ENCODE measurements at regions of chr14 and their contacts with region 1.

Region 1: GRCh38 chr14:55354500-55354899 is 57.1 kb downstream of the ATG14 start:
- DNase-seq: peak; percentile 72
- ATAC-seq: peak; percentile 92
- H3K4me3 Mint-ChIP-seq: no peak overlapping the region
- H3K27ac Mint-ChIP-seq: peak overlapping the region; percentile 49
- H3K4me1 Mint-ChIP-seq: peaks cover 19% of the 10 kb centered on the region
- H3K27me3 Mint-ChIP-seq: no peaks in the 10 kb centered on the region

Region 2: GRCh38 chr14:55102141-55102621 is 252.3 kb before region 1 on chr14:
- CTCF ChIA-PET with region 1: no interaction called
- DNase-seq: peak; percentile 88
- ATAC-seq: peak; percentile 63
- H3K4me3 Mint-ChIP-seq: peak overlapping the region; percentile 67
- H3K27ac Mint-ChIP-seq: peak overlapping the region; percentile 100
- H3K4me1 Mint-ChIP-seq: peaks cover 75% of the 10 kb centered on the region
- H3K27me3 Mint-ChIP-seq: no peaks in the 10 kb centered on the region

Region 3: GRCh38 chr14:55245657-55246268 is 108.7 kb before region 1 on chr14:
- CTCF ChIA-PET with region 1: interaction called, 11 read pairs
- DNase-seq: no peak
- ATAC-seq: peak; percentile 30
- H3K4me3 Mint-ChIP-seq: no peak overlapping the region
- H3K27ac Mint-ChIP-seq: no peak overlapping the region
- H3K4me1 Mint-ChIP-seq: no peaks in the 10 kb centered on the region
- H3K27me3 Mint-ChIP-seq: peaks cover 45% of the 10 kb centered on the region

Region 4: GRCh38 chr14:55277972-55278740 is 76.3 kb before region 1 on chr14:
- CTCF ChIA-PET with region 1: interaction called, 100 read pairs
- DNase-seq: no peak
- ATAC-seq: peak; percentile 71
- H3K4me3 Mint-ChIP-seq: no peak overlapping the region
- H3K27ac Mint-ChIP-seq: peak overlapping the region; percentile 64
- H3K4me1 Mint-ChIP-seq: peaks cover 49% of the 10 kb centered on the region
- H3K27me3 Mint-ChIP-seq: no peaks in the 10 kb centered on the region

Region 5: GRCh38 chr14:55366271-55366670 is 11.8 kb after region 1 on chr14:
- CTCF ChIA-PET with region 1: interaction called, 12 read pairs
- DNase-seq: no peak
- ATAC-seq: no peak
- H3K4me3 Mint-ChIP-seq: no peak overlapping the region
- H3K27ac Mint-ChIP-seq: no peak overlapping the region
- H3K4me1 Mint-ChIP-seq: no peaks in the 10 kb centered on the region
- H3K27me3 Mint-ChIP-seq: no peaks in the 10 kb centered on the region

Region 6: GRCh38 chr14:55427409-55427808 is 72.9 kb after region 1 on chr14:
- CTCF ChIA-PET with region 1: interaction called, 10 read pairs
- DNase-seq: no peak
- ATAC-seq: no peak
- H3K4me3 Mint-ChIP-seq: no peak overlapping the region
- H3K27ac Mint-ChIP-seq: no peak overlapping the region
- H3K4me1 Mint-ChIP-seq: peaks cover 3% of the 10 kb centered on the region
- H3K27me3 Mint-ChIP-seq: no peaks in the 10 kb centered on the region

Region 7: DNA sequence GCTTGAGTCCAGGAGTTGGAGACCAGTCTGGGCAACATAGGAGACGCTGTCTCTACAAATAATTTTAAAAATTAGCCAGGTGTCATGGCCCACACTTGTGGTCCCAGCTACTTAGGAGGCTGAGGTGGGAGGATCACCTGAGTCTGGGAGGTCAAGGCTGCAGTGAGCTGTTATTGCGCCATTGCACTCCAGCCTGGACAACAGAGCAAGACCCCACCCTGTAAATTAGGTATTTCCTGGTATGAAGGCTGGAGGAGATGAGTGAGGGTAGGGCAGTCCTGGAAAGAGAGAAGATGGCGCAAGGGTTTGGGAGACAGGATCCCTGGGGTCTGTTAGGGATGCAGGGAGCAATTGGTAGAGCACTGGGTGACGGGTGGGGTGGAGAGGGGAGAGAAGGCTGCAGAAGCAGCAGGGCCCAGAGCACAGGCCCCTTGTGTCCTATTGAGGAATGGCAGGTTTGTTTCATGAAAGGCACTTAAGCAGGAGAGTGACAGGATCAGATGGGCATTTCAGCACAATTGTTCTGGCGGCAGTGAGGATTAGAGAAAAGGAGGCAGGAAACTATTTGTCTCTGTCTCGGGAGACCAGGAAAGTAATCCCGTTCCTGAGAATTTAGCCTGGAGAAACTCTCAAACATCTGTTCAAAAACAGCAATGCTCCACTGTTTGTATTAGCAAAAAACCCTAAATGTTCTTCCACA is 178.3 kb after region 1 on chr14:
- CTCF ChIA-PET with region 1: no interaction called
- DNase-seq: no peak
- ATAC-seq: no peak
- H3K4me3 Mint-ChIP-seq: no peak overlapping the region
- H3K27ac Mint-ChIP-seq: no peak overlapping the region
- H3K4me1 Mint-ChIP-seq: no peaks in the 10 kb centered on the region
- H3K27me3 Mint-ChIP-seq: peaks cover 8% of the 10 kb centered on the region

Measured in activated CD8-positive, alpha-beta memory T cell treated with anti-CD3 and anti-CD28 coated beads, Interleukin-2, amount 10 ng/mL, durations not matched to agents 7 days and 5 days (primary cell).